Ovary (tissue), 10 donors: ENCODE measurements at regions of chr3 and their contacts with region 1.

Region 1: GRCh38 chr3:192655040-192655439 is 72.3 kb downstream of the FGF12 start:
- DNase-seq: no peak
- H3K4me3 ChIP-seq: no peak overlapping the region
- H3K27ac ChIP-seq: no peak overlapping the region
- H3K4me1 ChIP-seq: no peaks in the 10 kb centered on the region
- H3K27me3 ChIP-seq: no peaks in the 10 kb centered on the region
- CTCF ChIP-seq: no peak
- EP300 ChIP-seq: no peak
- POLR2A ChIP-seq: no peak

Region 2: DNA sequence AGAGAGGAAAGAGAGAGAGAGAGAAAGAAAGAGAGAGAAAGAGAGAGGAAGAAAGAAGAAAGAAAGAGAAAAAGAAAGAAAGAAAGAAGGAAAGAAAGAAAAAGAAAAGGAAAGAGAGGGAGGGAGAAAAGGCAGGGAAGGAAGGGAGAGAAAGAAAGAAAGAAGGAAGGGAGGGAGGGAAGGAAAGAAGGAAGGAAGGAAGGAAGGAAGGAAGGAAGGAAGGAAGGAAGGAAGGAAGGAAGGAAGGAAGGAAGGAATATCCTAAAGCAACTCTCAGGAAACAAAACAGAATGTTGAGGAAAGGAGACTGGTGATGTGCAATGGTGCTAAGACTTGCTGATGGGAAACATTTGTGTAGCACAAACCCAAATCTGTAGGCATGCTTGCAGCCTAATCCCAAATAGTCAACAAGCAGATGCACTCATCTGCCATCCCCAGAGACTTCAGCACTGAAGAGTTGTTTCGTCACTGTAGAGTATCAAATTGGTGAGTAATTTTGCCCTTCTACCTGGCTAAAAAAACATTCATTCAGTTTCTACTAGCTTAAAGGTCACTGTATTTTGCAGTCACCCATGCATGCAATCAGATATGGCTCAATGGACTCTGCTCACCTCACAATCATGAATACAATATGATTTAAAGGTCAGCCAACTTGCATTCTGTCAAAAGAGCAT is 408.1 kb before region 1 on chr3:
- intact Hi-C with region 1: no loop called
- DNase-seq: no peak
- H3K4me3 ChIP-seq: no peak overlapping the region
- H3K27ac ChIP-seq: no peak overlapping the region
- H3K4me1 ChIP-seq: no peaks in the 10 kb centered on the region
- H3K27me3 ChIP-seq: no peaks in the 10 kb centered on the region
- CTCF ChIP-seq: no peak
- EP300 ChIP-seq: no peak
- POLR2A ChIP-seq: no peak

Region 3: DNA sequence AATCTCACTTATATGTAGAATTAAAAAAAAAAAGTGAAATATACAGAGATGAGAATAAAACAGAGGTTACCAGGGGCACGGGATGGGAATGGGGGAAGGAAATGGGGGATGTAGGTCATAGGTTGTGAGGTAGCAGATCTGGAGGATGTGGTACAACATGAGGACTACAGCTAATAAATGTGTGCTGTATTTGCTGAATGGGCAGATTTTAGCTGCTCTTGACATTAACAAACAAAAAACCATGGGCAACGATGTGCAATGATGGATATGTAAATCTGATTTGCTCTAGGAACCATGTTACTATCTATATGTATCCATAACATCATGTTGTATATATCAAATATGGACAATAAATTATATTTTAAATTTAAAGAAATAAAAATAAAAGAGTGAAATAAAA is 15.1 kb before region 1 on chr3:
- intact Hi-C with region 1: loop called in 1 of 4 experiments (anchors 1 kb)
- DNase-seq: no peak
- H3K4me3 ChIP-seq: no peak overlapping the region
- H3K27ac ChIP-seq: no peak overlapping the region
- H3K4me1 ChIP-seq: no peaks in the 10 kb centered on the region
- H3K27me3 ChIP-seq: no peaks in the 10 kb centered on the region
- CTCF ChIP-seq: no peak
- EP300 ChIP-seq: no peak
- POLR2A ChIP-seq: no peak

Region 4: DNA sequence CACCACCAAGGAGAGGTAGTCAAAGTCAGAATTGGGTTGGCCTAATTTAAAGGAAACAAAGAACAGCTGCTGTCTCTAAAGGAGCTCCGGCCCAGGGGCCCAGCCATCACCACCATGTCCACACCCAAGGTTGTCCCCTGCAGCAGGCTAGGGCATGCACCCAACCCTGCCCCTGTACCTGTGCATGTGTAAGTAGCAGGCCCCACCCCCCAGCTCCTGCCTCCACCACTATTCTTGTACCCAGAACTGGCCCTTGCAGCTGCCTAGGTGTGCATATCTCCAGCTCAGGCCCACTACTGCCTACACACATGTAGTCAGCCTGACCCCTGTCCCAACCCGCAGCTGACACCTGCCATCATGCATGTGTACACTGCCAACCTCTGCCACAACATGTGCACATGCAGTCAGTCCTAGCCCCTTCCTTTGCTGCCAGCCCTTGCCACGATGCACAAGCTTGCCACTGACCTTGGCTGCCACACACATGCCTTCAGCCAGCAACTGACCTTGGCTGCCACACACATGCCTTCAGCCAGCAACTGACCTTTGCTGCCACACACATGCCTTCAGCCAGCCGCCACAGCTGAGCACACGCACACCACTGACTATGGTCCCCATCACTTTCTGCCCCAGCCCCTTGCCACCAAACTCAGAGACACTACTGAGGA is 32.6 kb after region 1 on chr3:
- intact Hi-C with region 1: loop called in 1 of 4 experiments (anchors 2 kb)
- DNase-seq: no peak
- H3K4me3 ChIP-seq: no peak overlapping the region
- H3K27ac ChIP-seq: no peak overlapping the region
- H3K4me1 ChIP-seq: no peaks in the 10 kb centered on the region
- H3K27me3 ChIP-seq: no peaks in the 10 kb centered on the region
- CTCF ChIP-seq: no peak
- EP300 ChIP-seq: no peak
- POLR2A ChIP-seq: no peak